Cardiac septum (tissue), 1 donor: ENCODE measurements at regions of chr10 and their contacts with region 1.

Region 1: GRCh38 chr10:102669206-102670064 is 25.2 kb downstream of the TRIM8 start:
- DNase-seq: no peak

Region 2: GRCh38 chr10:102593074-102593803 is 76.2 kb before region 1 on chr10:
- intact Hi-C with region 1: no loop called
- DNase-seq: peak; percentile 68

Region 3: DNA sequence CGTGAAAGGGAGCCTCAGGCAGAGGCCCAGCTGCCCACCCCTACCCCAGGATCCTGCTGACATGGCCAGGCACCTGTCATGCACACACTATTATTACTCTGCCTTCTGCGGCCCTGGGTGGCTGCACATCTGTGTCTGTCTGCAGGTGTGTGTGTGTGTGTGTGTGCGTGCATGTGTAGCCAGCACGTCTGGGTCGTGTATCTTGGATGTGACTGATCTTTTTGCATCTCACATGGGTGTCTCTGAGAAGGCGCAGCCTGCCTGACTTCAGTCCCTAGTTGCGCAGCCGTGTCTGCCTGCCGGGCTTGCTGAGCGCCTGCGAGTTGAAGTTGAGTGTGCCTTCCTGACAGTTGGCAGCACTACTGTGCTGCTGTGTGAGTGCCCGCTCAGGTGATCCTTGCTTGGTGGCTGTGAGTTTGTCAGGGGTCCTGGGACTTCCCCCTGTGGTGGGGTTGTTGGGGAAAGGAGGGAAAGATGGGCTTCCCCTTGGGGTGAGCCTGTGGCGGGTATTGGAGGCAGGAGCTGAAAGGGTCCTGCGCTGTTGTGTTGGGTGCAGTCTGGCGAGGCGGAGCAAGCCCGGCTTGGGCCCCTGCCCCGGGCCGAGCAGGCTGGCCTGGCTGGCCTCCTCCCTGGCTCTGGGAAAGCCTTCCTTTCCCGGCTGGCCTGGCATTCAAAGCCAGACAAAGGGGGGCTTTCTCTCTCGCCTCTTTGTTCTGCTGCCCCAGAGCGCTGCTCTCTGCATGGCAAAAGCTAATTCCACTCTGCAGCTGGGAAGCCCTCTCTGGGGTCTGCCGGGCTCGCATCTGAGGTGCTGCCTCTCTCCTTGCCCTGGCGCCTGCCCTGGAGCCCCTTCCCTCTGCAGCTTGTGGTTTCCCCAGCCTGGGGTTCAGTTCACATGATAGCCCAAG is 20.3 kb before region 1 on chr10:
- intact Hi-C with region 1: loop called (anchors 2 kb)
- DNase-seq: peak; percentile 75

Region 4: GRCh38 chr10:102752934-102753664 is 83.7 kb after region 1 on chr10:
- intact Hi-C with region 1: no loop called
- DNase-seq: no peak

Region 5: DNA sequence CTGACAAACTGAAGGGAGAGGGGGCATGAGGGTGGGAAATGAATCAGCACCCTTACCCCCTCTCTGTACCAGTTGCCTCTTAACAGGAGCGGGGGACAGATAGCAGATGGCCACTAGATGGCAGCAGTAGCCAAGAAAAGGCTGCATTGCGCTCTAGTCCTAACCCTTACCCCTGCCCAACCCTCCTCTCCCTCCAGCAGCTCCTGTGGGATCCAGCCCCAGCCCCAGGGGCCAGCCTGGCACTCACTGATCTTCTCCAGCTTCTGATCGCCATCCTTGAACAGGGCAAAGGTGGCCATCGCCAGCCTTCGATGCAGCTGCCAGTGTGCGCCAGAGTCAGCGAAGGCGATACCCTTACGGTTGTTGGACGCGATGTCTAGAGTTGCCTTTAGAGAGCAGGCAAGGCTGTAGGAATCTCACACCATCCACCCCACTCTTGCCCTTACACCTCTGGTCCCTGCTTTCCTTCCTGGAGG is 165.6 kb after region 1 on chr10:
- intact Hi-C with region 1: no loop called
- DNase-seq: peak; percentile 86